ENCODE measurements at regions of chr17 and their contacts with region 1.

Region 1: DNA sequence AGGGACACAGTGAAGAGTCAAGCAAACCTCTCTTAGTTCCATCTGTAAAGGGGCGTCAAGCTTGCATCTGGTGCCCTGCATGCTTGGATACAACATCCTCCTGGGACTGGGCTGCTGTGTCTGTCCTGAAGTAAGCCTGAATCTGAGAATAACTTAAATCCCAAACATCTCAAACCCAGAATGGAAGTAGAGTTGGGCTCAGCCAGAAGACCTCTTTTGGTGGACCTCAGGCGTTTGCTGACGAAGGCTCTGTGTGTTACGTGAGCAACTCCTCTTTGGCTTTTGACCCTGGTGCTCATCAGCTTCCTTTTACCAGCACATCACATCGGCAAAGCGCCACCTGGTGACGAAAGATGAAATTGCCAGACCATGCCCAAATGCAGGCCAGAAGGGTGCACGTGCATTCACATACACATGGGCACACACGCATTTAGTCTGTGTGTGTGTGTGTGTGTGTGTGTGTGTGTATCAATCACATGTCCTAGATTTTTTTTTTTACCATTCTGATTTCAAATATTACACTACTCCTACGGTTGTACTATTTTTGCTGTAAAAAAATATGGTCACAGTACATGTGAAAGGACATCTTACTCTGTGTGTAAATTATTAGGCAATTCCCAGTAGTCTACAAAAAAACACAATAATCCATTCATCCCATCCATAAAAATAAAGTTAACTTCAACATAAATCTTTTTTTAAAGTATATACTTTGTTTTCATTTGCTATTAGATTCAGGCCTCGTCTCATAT is 41.1 kb upstream of the FOXJ1 start:
- DNase-seq: peak; percentile 84 to 97 (median 91)
- ATAC-seq: peak; percentile 58 to 65 (median 60)
- H3K4me3 ChIP-seq: no peak overlapping the region
- H3K4me3 Mint-ChIP-seq: peak overlapping the region in 1 of 3 donors; percentile 45
- H3K27ac ChIP-seq: peak overlapping the region; percentile 49
- H3K27ac Mint-ChIP-seq: peak overlapping the region; percentile 93 to 94
- H3K4me1 ChIP-seq: peaks cover 39 to 62% of the 10 kb centered on the region in 2 experiments
- H3K4me1 Mint-ChIP-seq: peaks cover 52 to 69% (median 67%) of the 10 kb centered on the region in 3 donors
- H3K27me3 ChIP-seq: no peaks in the 10 kb centered on the region
- H3K27me3 Mint-ChIP-seq: no peaks in the 10 kb centered on the region

Region 2: DNA sequence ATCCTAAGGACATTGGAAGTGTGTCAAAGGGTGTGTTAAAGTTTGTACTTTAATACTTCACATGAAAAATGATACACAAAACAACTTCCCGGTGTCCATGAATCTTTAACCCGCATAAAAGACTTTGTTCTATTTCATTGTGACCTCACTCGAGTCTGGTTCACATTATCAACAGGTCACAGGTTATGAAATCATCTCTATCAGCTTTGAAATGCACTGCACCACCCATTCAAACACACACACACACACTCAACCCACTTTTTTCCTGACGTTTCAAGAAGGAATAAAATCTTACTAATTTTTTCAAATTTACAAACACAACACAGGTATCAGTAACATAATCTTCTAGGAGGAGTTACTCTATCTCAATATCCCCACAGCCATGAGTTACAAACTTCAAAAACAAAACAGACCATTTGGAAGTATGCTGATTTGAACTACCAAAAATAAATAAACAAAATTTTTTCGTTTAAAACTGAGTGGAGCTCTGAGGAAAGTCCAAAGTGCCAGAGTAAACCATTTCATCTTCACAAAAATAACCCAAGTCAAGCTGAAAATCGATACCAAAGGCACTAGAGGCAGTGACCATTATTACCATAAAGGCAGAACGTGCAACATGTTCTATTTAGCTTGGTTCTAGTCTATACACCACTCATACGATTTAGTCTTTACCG is 205.9 kb before region 1 on chr17:
- CTCF ChIA-PET with region 1: no interaction called
- POLR2A ChIA-PET with region 1: no interaction called
- DNase-seq: no peak
- ATAC-seq: no peak
- H3K4me3 ChIP-seq: no peak overlapping the region
- H3K4me3 Mint-ChIP-seq: peak overlapping the region in 2 of 3 donors; percentile 5 to 25
- H3K27ac ChIP-seq: no peak overlapping the region
- H3K27ac Mint-ChIP-seq: peak overlapping the region in 1 of 2 donors; percentile 20
- H3K4me1 ChIP-seq: peaks cover 5 to 18% of the 10 kb centered on the region in 2 experiments
- H3K4me1 Mint-ChIP-seq: peaks cover 53 to 57% (median 54%) of the 10 kb centered on the region in 3 donors
- H3K27me3 ChIP-seq: no peaks in the 10 kb centered on the region
- H3K27me3 Mint-ChIP-seq: no peaks in the 10 kb centered on the region

Region 3: DNA sequence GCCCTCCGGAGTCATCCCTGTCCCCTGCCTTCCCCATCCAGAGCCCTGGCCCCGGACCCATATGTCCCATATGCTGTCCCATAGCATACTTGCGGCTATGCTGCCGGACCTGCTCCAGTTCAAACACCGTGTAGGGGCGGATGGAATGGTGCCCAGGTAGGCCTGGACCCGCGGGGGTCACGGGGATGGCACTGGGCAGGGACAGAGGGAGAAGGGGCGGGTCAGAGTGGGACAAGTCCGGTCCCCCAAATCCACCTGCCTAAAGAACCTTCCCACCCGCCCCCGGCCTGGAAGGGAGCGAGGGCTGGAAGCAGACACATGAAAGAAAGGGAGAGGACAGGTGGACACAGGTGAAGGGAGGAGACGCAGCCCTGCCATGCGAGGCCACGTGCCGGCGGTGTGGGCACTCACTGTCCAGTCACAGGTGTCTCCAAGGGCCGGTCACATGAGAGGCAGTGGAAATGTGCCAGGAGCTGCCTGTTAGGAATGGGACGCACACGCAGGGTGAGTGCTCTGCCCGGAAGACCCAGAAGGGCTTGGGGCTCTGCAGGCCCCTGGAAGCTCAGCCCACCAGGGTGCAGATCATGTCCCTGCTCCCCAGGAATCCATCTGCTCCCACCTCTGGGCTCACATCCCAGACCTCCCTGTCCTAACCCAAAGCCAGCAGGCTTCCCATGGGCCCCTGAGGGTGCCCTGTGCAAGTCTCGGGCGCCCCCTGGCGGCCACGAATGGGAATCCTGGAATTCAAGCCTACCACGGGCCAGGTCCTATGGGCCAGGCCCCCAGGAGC is 97.0 kb after region 1 on chr17:
- CTCF ChIA-PET with region 1: interaction called, 7 to 18 read pairs
- POLR2A ChIA-PET with region 1: no interaction called
- DNase-seq: peak; percentile 48 to 89 (median 80)
- ATAC-seq: peak; percentile 72 to 86 (median 83)
- H3K4me3 ChIP-seq: no peak overlapping the region
- H3K4me3 Mint-ChIP-seq: no peak overlapping the region
- H3K27ac ChIP-seq: no peak overlapping the region
- H3K27ac Mint-ChIP-seq: no peak overlapping the region
- H3K4me1 ChIP-seq: peaks cover 5 to 31% of the 10 kb centered on the region in 2 experiments
- H3K4me1 Mint-ChIP-seq: peaks cover 19 to 31% (median 22%) of the 10 kb centered on the region in 3 donors
- H3K27me3 ChIP-seq: no peaks in the 10 kb centered on the region
- H3K27me3 Mint-ChIP-seq: no peaks in the 10 kb centered on the region

Region 4: GRCh38 chr17:76370261-76370993 is 188.2 kb after region 1 on chr17:
- CTCF ChIA-PET with region 1: no interaction called
- POLR2A ChIA-PET with region 1: no interaction called
- DNase-seq: no peak
- ATAC-seq: no peak
- H3K4me3 ChIP-seq: no peak overlapping the region
- H3K4me3 Mint-ChIP-seq: no peak overlapping the region
- H3K27ac ChIP-seq: no peak overlapping the region
- H3K27ac Mint-ChIP-seq: no peak overlapping the region
- H3K4me1 ChIP-seq: no peaks in the 10 kb centered on the region
- H3K4me1 Mint-ChIP-seq: no peaks in the 10 kb centered on the region
- H3K27me3 ChIP-seq: peaks cover 0 to 9% of the 10 kb centered on the region in 2 experiments
- H3K27me3 Mint-ChIP-seq: no peaks in the 10 kb centered on the region